ENCODE measurements at regions of chr1 and their contacts with region 1.

Region 1: DNA sequence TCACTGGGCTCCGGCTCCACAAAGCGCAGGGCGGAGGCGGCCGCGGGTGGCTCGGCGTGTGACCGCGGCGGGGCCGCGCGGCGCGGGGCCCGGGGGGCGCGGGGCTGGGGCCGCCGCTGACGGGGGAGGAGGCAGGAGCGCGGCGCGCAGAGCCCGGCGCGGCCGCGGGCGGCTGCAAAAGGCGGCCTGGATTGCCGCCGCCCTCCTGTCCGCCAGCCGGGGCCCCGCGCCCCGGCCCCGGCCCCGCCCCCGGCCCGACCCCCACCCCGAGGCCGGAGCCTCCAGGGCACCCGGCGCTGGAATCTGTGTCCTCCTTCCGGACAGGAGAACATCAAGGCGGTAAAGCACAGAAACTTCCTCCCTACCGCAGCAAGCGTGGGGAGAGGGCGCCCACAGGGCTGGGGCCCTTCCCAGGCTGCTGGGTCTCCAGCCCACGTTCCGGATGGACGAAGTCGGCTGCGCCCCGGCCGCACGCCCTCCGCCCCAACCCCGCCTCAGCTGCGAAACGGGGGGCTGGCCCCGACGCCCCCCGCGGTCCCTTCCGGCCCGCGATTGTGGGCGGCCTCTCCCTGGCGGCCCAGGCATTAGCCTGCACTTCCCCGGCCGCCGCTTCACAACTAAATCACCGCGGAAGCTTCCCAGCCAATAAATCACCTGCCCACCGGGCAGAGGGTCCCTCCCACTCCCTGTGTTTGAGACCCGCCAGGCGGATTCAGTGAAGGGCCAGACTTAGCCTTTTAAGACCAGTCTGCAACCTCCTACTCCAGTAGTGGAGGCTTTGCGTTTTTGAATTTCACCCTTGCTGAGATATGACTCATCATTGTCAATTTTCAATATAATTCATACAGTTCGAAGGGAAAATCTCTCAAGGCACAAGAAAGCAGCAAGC is 106.0 kb downstream of the SLC45A1 start:
- DNase-seq: peak; percentile 43 to 75 (median 49)
- H3K4me3 ChIP-seq: peak overlapping the region; percentile 15 to 89
- H3K4me3 Mint-ChIP-seq: peak overlapping the region; percentile 89 to 95 (median 93)
- H3K27ac ChIP-seq: peak overlapping the region; percentile 84
- H3K27ac Mint-ChIP-seq: peak overlapping the region; percentile 89 to 98 (median 95)
- H3K4me1 ChIP-seq: peaks cover 78% of the 10 kb centered on the region
- H3K4me1 Mint-ChIP-seq: peaks cover 38 to 45% (median 42%) of the 10 kb centered on the region in 4 donors
- H3K27me3 ChIP-seq: no peaks in the 10 kb centered on the region
- H3K27me3 Mint-ChIP-seq: no peaks in the 10 kb centered on the region

Region 2: DNA sequence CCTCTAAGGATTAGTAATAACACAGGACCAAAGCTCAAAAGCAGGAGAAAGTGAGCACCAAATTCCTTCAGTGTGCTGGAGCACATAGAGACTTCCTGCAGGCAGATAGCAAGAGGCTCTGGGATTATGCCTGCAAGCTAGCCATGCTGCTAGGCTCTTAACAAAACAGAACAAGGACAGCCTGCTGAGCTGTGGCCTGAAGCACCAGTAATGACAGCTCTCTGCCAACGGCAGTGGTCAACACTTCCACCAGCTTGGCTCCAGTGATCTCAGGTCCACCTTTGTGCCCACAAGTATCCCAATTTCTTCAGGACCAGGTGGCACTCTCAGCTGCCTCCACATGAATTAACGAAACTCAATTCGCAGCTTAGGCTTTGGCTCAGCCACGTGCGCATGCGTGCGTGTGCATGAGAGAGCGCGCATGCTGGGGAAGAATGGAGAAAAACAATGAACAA is 41.8 kb before region 1 on chr1:
- CTCF ChIA-PET with region 1: interaction called, 4 read pairs
- POLR2A ChIA-PET with region 1: interaction called, 5 read pairs
- intact Hi-C with region 1: loop called (anchors 5 kb)
- DNase-seq: no peak
- H3K4me3 ChIP-seq: no peak overlapping the region
- H3K4me3 Mint-ChIP-seq: peak overlapping the region in 4 of 8 donors; percentile 15 to 83 (median 60)
- H3K27ac ChIP-seq: no peak overlapping the region
- H3K27ac Mint-ChIP-seq: peak overlapping the region in 6 of 7 donors; percentile 8 to 96 (median 24)
- H3K4me1 ChIP-seq: peaks cover 94% of the 10 kb centered on the region
- H3K4me1 Mint-ChIP-seq: peaks cover 63 to 91% (median 84%) of the 10 kb centered on the region in 4 donors
- H3K27me3 ChIP-seq: no peaks in the 10 kb centered on the region
- H3K27me3 Mint-ChIP-seq: no peaks in the 10 kb centered on the region

Region 3: DNA sequence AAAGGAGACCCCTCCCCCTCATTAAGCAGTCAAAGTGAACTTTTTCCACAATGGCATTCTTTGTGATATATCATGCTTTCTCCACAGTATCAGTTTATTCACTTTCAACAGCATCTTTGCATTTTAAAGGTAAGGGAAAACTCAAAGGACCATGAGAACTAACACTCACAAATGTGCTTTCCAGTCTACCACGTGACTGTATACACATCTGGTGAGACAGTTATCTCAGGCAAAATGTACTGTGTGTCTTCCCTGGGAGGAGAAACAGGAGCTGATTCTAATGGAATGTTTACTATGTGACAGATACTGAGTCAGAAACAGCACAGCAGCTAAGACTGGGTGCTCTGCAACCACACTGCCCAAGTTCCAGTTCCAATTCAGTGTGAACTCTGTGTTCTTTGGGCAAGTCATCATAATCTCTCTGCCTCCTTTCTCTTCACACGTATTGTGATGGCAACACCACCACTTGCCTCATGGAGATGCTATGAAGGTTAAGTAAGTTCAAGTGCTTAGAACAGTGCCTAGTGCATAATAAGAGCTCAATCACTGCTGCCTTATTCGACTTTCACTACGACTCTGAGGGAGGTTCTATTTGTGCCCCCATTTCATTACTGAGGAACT is 27.0 kb before region 1 on chr1:
- CTCF ChIA-PET with region 1: interaction called, 5 read pairs
- POLR2A ChIA-PET with region 1: interaction called, 6 read pairs
- intact Hi-C with region 1: loop called (anchors 2 kb)
- DNase-seq: peak in 3 of 5 donors; percentile 21 to 51 (median 23)
- H3K4me3 ChIP-seq: no peak overlapping the region
- H3K4me3 Mint-ChIP-seq: peak overlapping the region in 6 of 8 donors; percentile 12 to 92 (median 63)
- H3K27ac ChIP-seq: peak overlapping the region; percentile 14
- H3K27ac Mint-ChIP-seq: peak overlapping the region; percentile 47 to 96 (median 82)
- H3K4me1 ChIP-seq: peaks cover 67% of the 10 kb centered on the region
- H3K4me1 Mint-ChIP-seq: peaks cover 58 to 74% (median 67%) of the 10 kb centered on the region in 4 donors
- H3K27me3 ChIP-seq: no peaks in the 10 kb centered on the region
- H3K27me3 Mint-ChIP-seq: no peaks in the 10 kb centered on the region

Region 4: DNA sequence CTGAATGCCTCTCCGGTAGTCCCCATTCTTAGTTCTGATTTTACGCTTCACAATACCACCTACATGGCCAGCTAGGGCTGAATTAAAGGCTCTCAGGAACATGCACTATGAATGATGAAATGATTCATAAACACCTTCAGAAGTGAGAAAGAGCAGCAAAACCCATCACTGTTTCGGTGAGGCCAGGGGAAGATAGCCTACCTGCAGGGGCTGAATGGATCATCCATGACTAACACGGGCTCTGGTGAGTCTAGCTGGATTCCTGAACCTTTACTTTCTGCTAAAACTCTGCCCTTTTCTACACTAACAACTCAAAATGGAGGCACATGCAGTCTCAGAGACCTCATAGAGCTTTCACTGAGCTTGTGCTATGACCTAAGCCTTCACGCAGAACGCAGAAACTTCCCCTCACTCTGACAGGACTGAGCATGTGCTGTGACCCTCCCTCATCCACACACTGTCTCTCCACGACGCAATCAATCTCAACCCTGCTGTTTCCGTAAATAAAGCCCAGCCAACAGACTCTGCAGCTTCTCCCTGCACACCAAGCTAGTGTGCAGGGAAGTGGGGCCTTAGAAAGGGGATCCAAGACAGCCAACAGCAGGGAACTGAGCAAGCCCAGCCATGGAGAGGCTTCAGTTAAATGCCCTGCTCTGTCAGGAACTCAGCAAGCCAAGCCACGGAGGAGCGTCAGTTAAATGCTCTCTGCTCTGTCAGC is 101.8 kb after region 1 on chr1:
- CTCF ChIA-PET with region 1: interaction called, 8 read pairs
- POLR2A ChIA-PET with region 1: interaction called, 60 read pairs
- intact Hi-C with region 1: loop called (anchors 2 kb)
- DNase-seq: peak; percentile 79 to 93 (median 85)
- H3K4me3 ChIP-seq: peak overlapping the region; percentile 44 to 63
- H3K4me3 Mint-ChIP-seq: no peak overlapping the region
- H3K27ac ChIP-seq: peak overlapping the region; percentile 78
- H3K27ac Mint-ChIP-seq: no peak overlapping the region
- H3K4me1 ChIP-seq: peaks cover 38% of the 10 kb centered on the region
- H3K4me1 Mint-ChIP-seq: peaks cover 21 to 43% (median 32%) of the 10 kb centered on the region in 4 donors
- H3K27me3 ChIP-seq: no peaks in the 10 kb centered on the region
- H3K27me3 Mint-ChIP-seq: no peaks in the 10 kb centered on the region